Posterior cingulate gyrus (tissue), 11 donors: ENCODE measurements at regions of chr2 and their contacts with region 1.

Region 1: GRCh38 chr2:20446917-20447436 is at the start of gene RHOB:
- DNase-seq: peak; percentile 95 to 100 (median 98)

Region 2: DNA sequence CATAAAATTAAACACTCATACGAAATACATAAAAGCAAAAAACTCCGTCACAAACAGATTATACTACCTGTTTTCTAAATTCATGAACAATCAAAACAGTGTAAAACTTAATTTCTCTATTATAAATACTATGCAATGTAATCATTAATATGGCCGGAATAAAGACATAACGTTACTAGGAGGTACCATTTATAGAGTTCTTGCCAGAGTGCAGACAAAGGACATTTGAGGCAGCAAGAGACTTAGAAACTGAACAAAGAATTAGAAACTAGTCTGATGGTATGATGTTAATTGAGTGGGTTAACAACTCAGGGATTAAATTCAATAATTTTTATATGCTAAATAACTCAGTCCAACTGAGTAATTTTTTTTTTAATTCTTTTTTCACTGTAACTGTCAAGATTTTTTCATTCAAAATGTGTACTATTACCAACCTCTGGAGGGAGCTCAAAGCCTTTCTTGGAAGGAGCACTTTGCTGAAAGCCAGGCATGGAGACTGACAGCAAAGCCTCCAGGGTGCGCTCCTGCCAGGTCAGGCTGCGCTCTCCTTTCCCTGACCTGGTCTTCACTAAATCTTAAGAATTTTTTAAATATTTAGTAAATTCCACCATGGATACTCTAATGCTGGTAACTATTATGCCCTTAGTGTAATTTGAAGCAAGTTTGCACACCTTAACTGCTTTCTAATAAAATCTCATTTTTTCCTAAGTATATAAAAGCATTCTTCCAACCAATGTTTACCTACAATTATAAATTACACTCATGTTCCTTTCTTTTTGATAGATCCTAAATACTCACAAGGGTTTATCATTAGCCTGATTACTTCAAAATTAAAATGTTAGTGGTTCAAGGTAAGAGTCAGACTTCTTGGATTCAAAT is 491.2 kb before region 1 on chr2:
- intact Hi-C with region 1: no loop called
- DNase-seq: peak in 8 of 10 donors; percentile 18 to 93 (median 50)

Region 3: DNA sequence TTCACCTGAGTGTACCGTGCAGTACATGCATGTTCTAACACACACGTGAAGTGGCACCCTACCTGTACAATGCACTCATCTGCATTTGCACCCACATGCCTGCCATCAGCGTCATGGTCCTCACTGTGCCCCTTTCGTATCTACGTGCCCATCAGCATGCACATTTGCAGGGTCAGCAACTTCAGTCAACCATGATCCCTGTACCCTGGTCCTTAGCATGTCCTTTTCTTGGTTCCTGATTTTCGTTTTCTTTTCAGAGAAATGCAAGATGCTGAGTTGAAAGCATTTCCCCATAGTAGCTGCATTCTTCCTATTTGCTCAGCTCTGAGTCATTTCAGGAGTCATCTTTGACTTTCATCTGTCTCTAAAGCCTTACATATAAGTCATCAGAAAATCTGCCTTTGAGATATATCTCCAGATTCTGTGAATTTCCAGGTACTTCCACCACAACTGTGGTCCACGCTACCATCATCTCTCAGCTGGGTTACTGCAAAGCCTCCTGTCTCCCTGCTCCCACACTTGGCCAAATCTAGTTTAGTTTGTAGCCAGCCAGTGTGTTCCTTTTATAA is 81.6 kb before region 1 on chr2:
- intact Hi-C with region 1: no loop called
- DNase-seq: no peak

Region 4: DNA sequence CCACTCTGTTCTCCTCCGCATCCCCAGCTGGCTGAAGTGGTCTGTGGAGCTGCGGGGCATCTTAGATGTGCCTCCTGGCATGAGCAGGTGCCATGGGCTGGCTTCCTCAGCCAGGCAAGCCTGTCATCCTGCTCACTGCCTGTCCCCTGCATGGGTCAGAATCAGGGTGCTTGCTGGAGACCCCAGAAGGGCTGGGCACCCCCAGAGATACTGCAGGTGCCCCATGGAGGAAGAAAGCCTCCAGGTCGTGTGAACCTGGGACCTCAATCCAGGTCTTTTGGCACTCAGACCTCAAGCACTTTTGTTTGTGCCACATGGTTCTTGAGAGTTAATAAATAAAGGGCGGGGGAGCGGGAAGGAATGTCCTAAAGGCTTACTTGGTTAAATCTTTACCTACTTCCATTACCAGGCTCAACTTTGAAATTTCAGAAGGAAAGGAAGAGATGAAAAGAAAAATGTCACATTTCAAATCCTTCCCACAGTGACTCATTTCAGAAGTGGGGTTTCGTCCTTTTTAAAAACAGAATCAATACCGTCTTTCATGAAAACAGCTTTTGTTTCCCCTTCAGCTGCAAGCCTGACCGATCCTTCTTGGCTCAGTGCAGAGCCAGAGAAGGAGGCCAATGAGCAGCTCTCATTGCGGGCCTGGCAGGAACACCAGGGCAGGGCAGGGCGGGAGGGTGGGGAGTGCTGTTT is 69.8 kb after region 1 on chr2:
- intact Hi-C with region 1: loop called (anchors 5 kb)
- DNase-seq: peak in 8 of 10 donors; percentile 51 to 95 (median 70)

Region 5: DNA sequence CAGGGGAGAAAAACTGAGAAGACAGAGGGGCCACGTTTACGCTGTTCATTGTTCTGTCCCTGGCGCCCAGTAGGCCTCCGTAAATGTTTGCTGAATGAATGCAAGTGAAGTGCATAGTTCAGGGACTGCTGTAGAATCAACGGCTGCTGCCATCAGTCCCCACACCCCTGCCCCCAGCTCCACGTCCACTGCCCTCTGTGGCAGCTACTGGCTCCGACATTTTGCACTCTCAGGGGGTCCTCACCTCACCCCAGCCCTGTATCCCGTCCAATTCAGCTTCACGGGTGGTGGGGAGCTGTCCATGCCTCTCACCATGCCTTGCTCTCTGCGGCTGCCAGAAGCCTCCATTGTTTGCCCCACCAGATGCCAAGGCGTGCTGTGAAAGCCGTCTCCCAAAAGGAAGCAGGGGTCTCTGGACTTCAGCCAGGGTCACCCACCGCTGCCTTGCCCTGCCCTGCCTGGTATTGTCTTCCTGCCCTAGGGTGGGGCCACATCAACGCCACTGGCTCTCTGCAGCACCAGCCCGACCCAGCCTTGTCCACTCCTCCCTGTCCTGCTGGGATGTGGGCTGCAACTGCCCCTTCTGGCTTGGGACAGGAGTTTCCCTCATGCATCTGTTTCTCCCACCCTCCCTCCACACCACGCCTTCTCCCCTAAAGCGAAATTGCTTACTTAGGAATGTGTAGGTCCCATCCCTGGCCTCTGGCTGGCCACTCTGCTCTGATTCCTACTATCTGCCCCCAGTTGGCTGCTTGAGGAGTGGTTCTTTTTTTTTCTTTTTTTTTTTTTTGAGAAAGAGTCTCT is 85.9 kb after region 1 on chr2:
- intact Hi-C with region 1: no loop called
- DNase-seq: peak in 2 of 10 donors; percentile 59 to 68

Region 6: GRCh38 chr2:20584637-20585321 is 137.8 kb after region 1 on chr2:
- intact Hi-C with region 1: loop called (anchors 5 kb)
- DNase-seq: peak in 8 of 10 donors; percentile 45 to 95 (median 64)

Region 7: DNA sequence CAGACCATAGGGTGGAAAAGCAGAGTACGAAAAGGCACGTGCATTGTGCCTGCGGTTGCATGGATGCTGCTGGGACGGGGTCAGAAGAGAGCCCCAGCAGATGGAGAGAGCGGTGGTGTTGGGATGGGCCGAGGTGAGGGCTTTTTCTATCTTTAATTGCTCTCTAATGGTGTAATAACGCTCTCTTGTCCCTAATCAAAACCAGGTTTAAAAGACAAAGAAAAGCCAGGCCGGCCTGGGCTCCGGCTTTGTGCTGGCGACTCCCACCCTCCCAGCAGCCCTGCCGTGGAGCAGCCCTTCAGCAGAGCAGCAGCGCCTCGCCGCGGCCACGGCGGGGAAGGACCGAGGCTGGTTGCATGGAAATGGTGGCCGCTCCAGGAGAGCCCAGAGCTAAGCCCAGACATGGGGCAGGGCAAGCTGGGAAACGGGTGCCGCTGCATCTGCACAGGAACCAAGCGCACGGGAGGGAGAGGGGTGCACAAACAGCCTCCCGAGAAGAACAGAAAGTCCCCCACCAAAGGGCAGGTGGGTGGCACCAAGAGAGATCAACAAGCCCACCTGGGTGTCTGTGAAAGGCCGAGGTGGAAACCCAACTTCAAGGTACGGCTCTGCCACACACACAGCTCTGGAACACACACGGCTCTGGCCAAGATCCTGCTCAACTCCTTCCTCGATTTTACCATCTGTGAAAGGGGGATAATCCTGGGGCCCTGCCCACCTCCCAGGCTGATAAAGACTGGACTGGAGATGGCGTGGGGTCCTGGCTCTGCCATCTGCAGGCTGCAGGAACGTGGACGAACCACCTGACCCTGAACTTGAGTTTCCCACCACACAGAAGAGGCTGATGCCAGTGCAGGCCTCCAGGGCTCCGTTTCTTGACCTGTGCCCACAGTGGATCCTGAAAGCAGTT is 189.0 kb after region 1 on chr2:
- intact Hi-C with region 1: loop called (anchors 1 kb)
- DNase-seq: peak; percentile 81 to 99 (median 92)

Region 8: GRCh38 chr2:20642055-20642971 is 195.3 kb after region 1 on chr2:
- intact Hi-C with region 1: loop called (anchors 2 kb)
- DNase-seq: peak; percentile 71 to 97 (median 84)